ENCODE measurements at regions of chr1 and their contacts with region 1.

Region 1: GRCh38 chr1:230797942-230798418 is 50.8 kb downstream of the CAPN9 start:
- DNase-seq: peak in 2 of 4 donors; percentile 59 to 77
- ATAC-seq: peak; percentile 93
- H3K4me3 ChIP-seq: no peak overlapping the region
- H3K27ac ChIP-seq: no peak overlapping the region
- H3K4me1 ChIP-seq: no peaks in the 10 kb centered on the region
- H3K27me3 ChIP-seq: peaks cover 0 to 5% of the 10 kb centered on the region in 2 donors
- CTCF ChIP-seq: peak; percentile 36 to 56

Region 2: GRCh38 chr1:230713915-230714764 is 83.8 kb before region 1 on chr1 and contains the start of gene AGT:
- intact Hi-C with region 1: no loop called
- DNase-seq: peak in 3 of 4 donors; percentile 47 to 88 (median 75)
- ATAC-seq: peak; percentile 87
- H3K4me3 ChIP-seq: no peak within 1 kb of the TSS
- H3K27ac ChIP-seq: no peak within 1 kb of the TSS
- H3K4me1 ChIP-seq: no peaks in the 10 kb centered on the region
- H3K27me3 ChIP-seq: peaks cover 0 to 14% of the 10 kb centered on the region in 2 donors
- CTCF ChIP-seq: no peak
- polyA plus RNA-seq, gene AGT: 0.28 to 1.2 (median 0.63) TPM

Region 3: DNA sequence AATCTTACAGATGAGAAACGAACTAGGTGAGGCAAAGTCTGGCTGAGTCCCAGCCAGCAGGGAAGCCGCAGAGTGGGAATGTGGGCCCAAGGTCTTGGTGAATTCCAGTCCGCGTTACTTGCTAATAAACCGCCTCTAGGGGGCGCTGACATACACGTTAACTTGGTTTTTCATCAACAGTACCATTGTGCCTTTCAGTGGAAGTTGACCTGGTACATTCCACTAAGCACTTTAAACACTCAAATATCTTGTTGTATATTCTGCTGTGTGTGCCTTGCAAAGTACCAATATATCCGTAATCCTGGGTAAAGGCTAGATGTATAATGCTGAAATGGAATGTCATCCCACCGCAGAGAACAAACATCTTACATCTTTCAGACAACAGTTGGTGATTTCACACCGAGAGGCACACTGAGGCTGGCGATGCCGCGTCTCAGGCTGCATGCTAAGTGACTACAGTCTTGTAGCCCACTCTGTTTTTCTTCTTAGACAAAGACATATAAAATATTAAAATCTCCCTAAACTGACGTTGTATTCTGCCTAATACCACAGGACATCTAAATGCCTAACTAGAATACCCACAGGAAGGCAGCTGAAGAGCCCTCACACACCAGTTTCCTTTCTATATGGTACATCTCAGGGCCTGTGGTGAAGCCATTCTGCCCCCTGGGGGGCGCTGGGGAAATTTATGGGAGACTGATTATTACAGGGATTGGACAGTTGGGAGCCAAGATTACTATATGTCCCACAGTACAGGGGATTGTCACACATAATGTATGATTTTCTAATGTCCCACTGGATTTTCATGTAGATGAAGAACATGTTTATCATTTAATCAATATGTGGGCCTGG is 119.5 kb after region 1 on chr1:
- intact Hi-C with region 1: loop called in 1 of 2 experiments (anchors 5 kb)
- DNase-seq: peak; percentile 45 to 80 (median 65)
- ATAC-seq: peak; percentile 92
- H3K4me3 ChIP-seq: no peak overlapping the region
- H3K27ac ChIP-seq: no peak overlapping the region
- H3K4me1 ChIP-seq: no peaks in the 10 kb centered on the region
- H3K27me3 ChIP-seq: no peaks in the 10 kb centered on the region
- CTCF ChIP-seq: peak; percentile 67 to 73

Region 4: DNA sequence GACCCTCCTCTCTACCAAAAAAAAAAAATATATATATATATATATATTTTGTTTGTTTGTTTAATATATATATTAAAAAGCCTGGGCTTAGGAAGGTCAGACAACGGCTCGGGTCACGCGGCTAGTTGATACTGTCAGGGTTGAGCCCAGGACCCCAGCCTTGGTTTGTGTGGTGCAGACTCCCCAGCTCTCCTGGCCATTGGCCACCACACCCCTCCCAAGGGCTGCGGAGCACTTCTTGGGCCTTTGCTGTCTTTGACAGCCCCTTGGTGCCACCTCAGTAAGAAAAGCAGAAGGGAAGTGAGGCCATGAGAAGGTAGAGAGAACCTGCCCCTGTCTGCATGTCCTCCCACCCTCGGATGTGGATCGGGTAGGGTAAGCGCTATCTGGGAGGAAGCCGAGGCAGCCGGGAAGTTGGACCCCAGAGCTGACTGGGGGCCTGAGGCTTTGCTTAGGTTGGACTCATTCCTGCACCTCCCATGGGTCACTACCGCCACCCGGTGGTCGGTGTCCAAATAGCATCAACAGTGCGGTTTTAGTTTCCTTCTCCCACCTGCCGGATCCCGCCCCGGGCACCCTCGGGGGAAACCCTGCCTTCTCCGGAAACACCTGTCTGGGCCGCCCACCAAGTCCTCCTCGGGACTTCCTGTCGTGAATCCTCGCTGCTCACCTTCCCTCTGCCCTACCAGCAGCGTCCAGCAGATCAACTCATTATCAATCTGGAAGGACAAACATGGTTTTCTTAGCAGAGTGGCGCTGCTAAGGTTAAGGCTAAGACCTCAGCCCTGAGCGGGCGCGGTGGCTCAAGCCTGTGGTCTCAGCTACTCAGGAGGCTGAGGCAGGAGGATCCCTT is 413.3 kb after region 1 on chr1:
- intact Hi-C with region 1: loop called in 1 of 2 experiments (anchors 5 kb)
- DNase-seq: peak; percentile 73 to 92 (median 82)
- ATAC-seq: peak; percentile 99
- H3K4me3 ChIP-seq: peak overlapping the region; percentile 22 to 38
- H3K27ac ChIP-seq: no peak overlapping the region
- H3K4me1 ChIP-seq: peaks cover 0 to 9% of the 10 kb centered on the region in 2 donors
- H3K27me3 ChIP-seq: no peaks in the 10 kb centered on the region
- CTCF ChIP-seq: peak; percentile 82 to 85

Measured in left lung (tissue), 14 donors.